Heart right ventricle (tissue), 16 donors: ENCODE measurements at regions of chr12 and their contacts with region 1.

Region 1: DNA sequence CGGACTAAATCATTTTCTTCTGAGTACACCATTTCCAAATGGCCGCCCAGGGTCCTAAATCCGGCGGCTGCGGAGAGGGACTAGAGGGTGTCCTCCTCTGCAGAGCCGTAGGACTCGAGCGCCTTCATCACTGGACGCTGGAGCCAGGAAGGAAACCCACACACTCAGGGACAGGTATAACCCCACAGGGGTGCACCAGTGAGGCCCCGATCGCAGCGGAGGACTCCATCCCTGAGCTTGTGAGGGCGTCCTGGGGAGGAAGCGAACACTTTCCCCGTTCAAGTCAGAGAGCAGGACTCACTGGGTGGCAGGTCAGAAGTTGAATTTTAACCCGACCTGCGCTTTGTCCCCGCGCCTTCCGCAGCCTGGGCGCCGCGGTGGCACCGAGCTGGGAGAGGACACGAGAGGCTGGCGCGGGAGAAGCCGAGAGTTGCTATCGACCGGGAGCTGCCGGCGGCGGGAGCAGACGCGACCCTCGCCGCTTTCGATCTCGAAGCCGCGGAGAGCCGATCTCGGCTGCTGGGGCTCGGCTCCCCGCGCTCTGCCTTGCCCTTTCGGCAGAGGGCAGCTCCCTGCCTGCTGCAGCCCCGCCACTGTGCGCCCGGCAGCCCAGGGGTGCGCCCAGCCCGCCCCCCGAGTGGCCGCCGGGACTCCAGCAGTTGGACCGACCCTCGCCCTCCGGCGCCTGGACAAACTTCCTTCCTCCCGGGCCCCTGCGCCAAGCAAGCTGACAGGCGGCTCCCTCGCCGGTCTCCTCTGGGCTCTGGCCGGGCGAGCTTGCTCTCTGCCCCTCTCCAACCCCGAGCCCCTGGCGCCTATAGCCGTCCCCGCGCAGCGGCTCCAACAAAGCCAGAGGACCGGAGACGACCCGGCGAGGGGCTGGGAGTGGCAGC is 990 bp downstream of the LIN7A start:
- DNase-seq: peak; percentile 27 to 48
- ATAC-seq: peak; percentile 64 to 94 (median 78)
- H3K4me3 ChIP-seq: peak overlapping the region; percentile 68 to 84 (median 77)
- H3K27ac ChIP-seq: peak overlapping the region; percentile 79 to 96 (median 94)
- H3K4me1 ChIP-seq: peaks cover 0 to 30% (median 13%) of the 10 kb centered on the region in 9 donors
- H3K27me3 ChIP-seq: peaks cover 0 to 18% (median 0%) of the 10 kb centered on the region in 7 donors
- CTCF ChIP-seq: peak in 2 of 9 donors; percentile 7 to 14

Region 2: GRCh38 chr12:80877721-80878265 is 59.0 kb before region 1 on chr12:
- intact Hi-C with region 1: loop called in 2 of 10 experiments (anchors 2 to 5 kb)
- DNase-seq: no peak
- ATAC-seq: peak; percentile 67 to 93 (median 86)
- H3K4me3 ChIP-seq: peak overlapping the region in 8 of 10 donors; percentile 4 to 33 (median 13)
- H3K27ac ChIP-seq: peak overlapping the region; percentile 50 to 85 (median 76)
- H3K4me1 ChIP-seq: peaks cover 2 to 37% (median 11%) of the 10 kb centered on the region in 9 donors
- H3K27me3 ChIP-seq: no peaks in the 10 kb centered on the region
- CTCF ChIP-seq: no peak

Region 3: GRCh38 chr12:80912901-80913694 is 23.6 kb before region 1 on chr12:
- intact Hi-C with region 1: no loop called
- DNase-seq: no peak
- ATAC-seq: peak in 1 of 8 donors; percentile 33
- H3K4me3 ChIP-seq: peak overlapping the region in 5 of 10 donors; percentile 7 to 37 (median 32)
- H3K27ac ChIP-seq: no peak overlapping the region
- H3K4me1 ChIP-seq: peaks cover 0 to 16% (median 0%) of the 10 kb centered on the region in 9 donors
- H3K27me3 ChIP-seq: no peaks in the 10 kb centered on the region
- CTCF ChIP-seq: no peak

Region 4: DNA sequence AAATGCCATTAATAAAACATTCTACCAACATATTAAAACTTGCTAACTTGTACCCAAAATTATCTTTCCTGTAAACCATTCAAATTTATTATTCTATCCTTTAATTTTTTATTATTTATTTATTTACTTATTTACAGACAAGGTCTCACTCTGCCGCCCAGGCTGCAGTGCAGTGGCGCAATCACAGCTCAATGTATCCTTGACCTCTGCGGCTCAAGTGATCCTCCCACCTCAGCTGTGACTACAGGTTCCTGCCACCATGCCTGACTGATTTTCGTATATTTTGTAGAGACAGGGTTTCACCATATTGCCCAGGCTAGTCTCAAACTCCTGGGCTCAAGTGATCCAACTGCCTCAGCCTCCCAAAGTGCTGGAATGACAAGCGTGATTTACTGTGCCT is 21.4 kb after region 1 on chr12:
- intact Hi-C with region 1: no loop called
- DNase-seq: no peak
- ATAC-seq: no peak
- H3K4me3 ChIP-seq: no peak overlapping the region
- H3K27ac ChIP-seq: no peak overlapping the region
- H3K4me1 ChIP-seq: no peaks in the 10 kb centered on the region
- H3K27me3 ChIP-seq: no peaks in the 10 kb centered on the region
- CTCF ChIP-seq: no peak

Region 5: GRCh38 chr12:81077686-81078441 is 141.1 kb after region 1 on chr12 and contains the start of gene ACSS3:
- intact Hi-C with region 1: loop called in 1 of 10 experiments (anchors 5 kb)
- DNase-seq: peak; percentile 65 to 78
- ATAC-seq: peak; percentile 87 to 93 (median 90)
- H3K4me3 ChIP-seq: peak within 1 kb of the TSS; percentile 29 to 85 (median 78)
- H3K27ac ChIP-seq: peak within 1 kb of the TSS; percentile 72 to 94 (median 92)
- H3K4me1 ChIP-seq: peaks cover 0 to 46% (median 15%) of the 10 kb centered on the region in 9 donors
- H3K27me3 ChIP-seq: peaks cover 0 to 17% (median 0%) of the 10 kb centered on the region in 7 donors
- CTCF ChIP-seq: no peak
- total RNA-seq, gene ACSS3: 17.5 to 30.3 (median 25.5) TPM

Region 6: GRCh38 chr12:81136519-81136918 is 199.8 kb after region 1 on chr12:
- intact Hi-C with region 1: no loop called
- DNase-seq: no peak
- ATAC-seq: no peak
- H3K4me3 ChIP-seq: no peak overlapping the region
- H3K27ac ChIP-seq: no peak overlapping the region
- H3K4me1 ChIP-seq: peaks cover 0 to 4% (median 0%) of the 10 kb centered on the region in 9 donors
- H3K27me3 ChIP-seq: no peaks in the 10 kb centered on the region
- CTCF ChIP-seq: no peak